ENCODE measurements at regions of chr9 and their contacts with region 1.

Region 1: DNA sequence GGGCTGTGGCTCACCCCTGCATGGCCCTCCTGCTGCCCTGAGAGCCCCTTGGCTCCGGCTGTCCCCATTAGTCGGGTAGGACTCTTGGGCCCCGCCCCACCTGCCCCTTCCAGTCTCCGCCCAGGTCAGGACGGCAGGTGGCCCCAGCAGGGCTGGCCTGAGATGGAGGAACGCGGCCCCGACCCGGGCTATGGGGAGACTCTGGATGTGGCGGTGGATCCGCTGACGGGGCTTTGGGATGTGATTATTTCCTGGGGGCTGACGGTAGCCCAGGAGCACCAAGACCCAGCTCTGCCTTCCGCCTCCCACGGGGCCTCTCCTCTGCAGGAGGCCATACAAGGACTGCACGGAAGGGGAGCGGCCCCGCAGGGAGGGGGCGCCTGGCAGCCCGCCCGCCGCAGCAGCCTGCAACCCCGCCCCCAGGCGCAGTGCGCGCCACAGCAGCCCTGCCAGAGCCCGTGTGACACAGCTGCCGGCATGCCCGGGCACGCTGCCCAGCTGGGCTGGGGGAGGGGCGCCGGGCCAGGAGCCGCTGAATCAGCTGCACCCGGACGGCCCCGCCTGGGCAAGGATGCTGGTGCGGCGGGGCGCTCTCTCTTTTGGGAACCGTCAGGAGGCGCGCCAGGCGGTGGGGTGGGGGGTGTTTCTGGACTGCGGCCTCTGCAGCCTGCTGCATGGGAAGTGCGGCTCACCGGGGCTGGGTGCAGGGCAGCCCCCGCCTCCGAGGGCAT is 9.2 kb downstream of the TMEM250 start:
- DNase-seq: peak; percentile 50

Region 2: DNA sequence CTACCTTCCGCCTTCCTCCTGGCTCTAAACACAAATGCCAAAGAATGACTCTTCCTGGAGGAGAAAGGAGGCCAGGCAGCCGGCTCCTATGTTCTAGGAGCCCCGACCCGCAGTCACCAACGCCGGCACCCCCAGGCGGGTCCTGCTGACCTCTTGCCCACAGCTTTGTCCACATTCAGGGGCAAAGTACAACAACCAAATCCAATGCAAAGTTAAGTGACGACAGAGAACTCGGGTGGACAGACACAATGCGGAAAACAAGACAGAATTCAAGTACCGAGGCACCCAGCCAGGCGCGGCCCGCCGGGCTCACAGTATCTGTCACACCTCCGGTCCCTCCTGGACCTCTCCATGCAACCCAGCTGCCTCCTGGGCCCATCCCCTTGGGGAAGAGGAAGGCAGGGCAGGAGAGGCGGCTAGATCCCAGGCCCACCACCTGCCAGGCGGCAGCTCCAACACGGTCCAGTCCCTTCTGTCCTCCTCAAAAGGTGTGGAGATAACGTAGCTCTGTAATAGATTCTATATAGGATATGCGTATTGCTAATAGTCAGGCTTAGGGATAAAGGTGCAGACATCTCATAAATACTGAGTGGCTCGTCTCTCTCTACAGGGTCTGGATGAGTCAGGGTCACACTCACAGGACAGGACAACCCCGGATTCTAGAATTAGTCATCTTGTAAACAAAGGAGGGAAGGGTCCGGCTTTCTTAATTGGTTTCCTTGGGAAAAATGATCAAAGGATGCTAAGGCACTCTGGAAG is 101.4 kb before region 1 on chr9:
- in situ Hi-C with region 1: loop called (anchors 5 kb)
- DNase-seq: no peak